HepG2 (cell line): ENCODE measurements at regions of chr2 and their contacts with region 1.

Region 1: GRCh38 chr2:74529357-74530238 is at the starts of genes AUP1 and HTRA2:
- DNase-seq: peak; percentile 98
- ATAC-seq: peak; percentile 90
- H3K4me3 ChIP-seq: peak within 1 kb of the TSS; percentile 84 to 100 (median 100)
- H3K27ac ChIP-seq: peak within 1 kb of the TSS; percentile 95
- H3K4me1 ChIP-seq: peaks cover 55% of the 10 kb centered on the region
- H3K27me3 ChIP-seq: no peaks in the 10 kb centered on the region; a peak in 1 of 5 replicates
- CTCF ChIP-seq: peak; percentile 33
- EP300 ChIP-seq: peak; percentile 58 to 73; a peak in 2 of 4 replicates
- POLR2A ChIP-seq: peak; percentile 82 to 89
- RAD21 ChIP-seq: peak; percentile 52
- total RNA-seq, gene AUP1: 67.0 and 174 TPM in 2 replicates
- total RNA-seq, gene HTRA2: 37.0 and 47.7 TPM in 2 replicates

Region 2: GRCh38 chr2:73685770-73686438 is 843.7 kb before region 1 on chr2:
- CTCF ChIA-PET with region 1: no interaction called
- POLR2A ChIA-PET with region 1: no interaction called
- in situ Hi-C with region 1: no loop called
- intact Hi-C with region 1: no loop called
- DNase-seq: peak; percentile 71
- ATAC-seq: peak; percentile 68
- H3K4me3 ChIP-seq: peak overlapping the region in 1 of 3 experiments; percentile 14; a peak in 2 of 6 replicates
- H3K27ac ChIP-seq: no peak overlapping the region
- H3K4me1 ChIP-seq: peaks cover 22% of the 10 kb centered on the region
- H3K27me3 ChIP-seq: no peaks in the 10 kb centered on the region
- CTCF ChIP-seq: no peak; the same call in 1 of the 2 replicates
- EP300 ChIP-seq: no peak
- POLR2A ChIP-seq: no peak
- RAD21 ChIP-seq: no peak

Region 3: DNA sequence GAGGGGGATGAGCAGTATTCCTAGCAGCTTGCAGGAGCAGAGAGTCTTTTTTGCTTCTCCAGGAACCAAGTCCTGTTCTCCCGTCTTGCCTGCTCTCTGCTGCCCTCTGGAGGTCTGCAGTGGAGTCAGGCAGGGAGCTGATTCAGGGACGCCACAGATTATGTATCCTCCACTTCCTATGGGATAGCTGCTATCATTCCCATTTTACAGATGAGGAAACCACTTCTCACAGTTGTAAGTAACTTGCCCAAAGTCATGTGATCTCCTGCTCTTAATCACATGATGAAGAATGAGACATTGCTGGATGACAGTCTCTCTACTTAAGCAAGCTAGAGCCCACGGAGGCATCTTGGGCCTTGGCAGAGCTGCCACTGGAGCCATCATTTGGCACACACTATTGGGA is 194.7 kb before region 1 on chr2:
- CTCF ChIA-PET with region 1: interaction called, 4 read pairs
- POLR2A ChIA-PET with region 1: no interaction called
- in situ Hi-C with region 1: no loop called
- intact Hi-C with region 1: loop called (anchors 1 kb)
- DNase-seq: peak; percentile 59
- ATAC-seq: peak; percentile 89
- H3K4me3 ChIP-seq: no peak overlapping the region
- H3K27ac ChIP-seq: no peak overlapping the region
- H3K4me1 ChIP-seq: no peaks in the 10 kb centered on the region
- H3K27me3 ChIP-seq: no peaks in the 10 kb centered on the region
- CTCF ChIP-seq: peak; percentile 92
- EP300 ChIP-seq: no peak
- POLR2A ChIP-seq: no peak
- RAD21 ChIP-seq: peak; percentile 65

Region 4: GRCh38 chr2:74472086-74472944 is 57.3 kb before region 1 on chr2 and contains the start of gene MRPL53:
- CTCF ChIA-PET with region 1: no interaction called
- POLR2A ChIA-PET with region 1: interaction called, 24 read pairs
- in situ Hi-C with region 1: no loop called
- intact Hi-C with region 1: loop called (anchors 1 kb)
- DNase-seq: peak; percentile 92
- ATAC-seq: peak; percentile 87
- H3K4me3 ChIP-seq: peak within 1 kb of the TSS; percentile 67 to 91 (median 83)
- H3K27ac ChIP-seq: peak within 1 kb of the TSS; percentile 83
- H3K4me1 ChIP-seq: peaks cover 52% of the 10 kb centered on the region
- H3K27me3 ChIP-seq: no peaks in the 10 kb centered on the region; a peak in 1 of 5 replicates
- CTCF ChIP-seq: peak; percentile 42; the same call in 1 of the 2 replicates
- EP300 ChIP-seq: peak in 1 of 2 experiments; percentile 54; a peak in 2 of 4 replicates
- POLR2A ChIP-seq: peak; percentile 94 to 97
- RAD21 ChIP-seq: peak; percentile 45; the same call in 1 of the 2 replicates
- total RNA-seq, gene MRPL53: 51.9 and 53.8 TPM in 2 replicates

Region 5: DNA sequence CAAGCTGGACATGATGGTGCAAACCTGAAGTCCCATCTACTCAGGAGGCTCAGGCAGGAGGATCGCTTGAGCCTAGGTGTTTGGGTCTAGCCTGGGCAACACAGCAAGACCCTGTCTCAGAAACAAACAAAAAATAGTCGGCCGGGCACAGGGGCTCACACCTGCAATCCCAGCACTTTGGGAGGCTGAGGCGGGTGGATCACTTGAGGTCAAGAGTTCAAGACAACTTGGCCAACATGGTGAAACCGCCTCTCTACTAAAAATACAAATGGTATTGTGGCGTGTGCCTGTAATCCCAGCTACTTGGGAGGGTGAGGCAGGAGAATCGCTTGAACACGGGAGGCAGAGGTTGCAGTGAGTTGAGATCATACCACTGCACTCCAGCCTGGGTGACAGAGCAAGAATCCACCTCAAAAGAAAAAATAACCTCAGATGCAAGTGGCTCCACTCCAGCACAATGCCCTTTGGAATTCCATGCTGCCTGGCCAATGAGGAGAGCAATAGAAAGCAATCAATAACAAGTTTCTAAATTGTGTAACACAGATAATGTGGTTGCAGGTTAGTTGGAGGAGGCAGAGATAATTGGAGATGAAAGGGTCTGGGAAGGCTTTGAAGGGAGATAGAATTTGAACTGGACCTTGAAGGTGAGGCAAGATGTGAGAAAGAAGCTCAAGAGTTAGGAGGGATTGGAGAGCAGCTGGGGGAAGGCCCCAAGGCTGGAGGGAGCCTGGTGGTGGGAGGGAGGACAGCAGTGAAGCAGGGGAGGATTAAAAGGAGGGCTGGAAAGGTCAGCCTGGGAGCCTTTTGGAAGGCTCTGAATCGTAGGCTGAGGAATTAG is 40.7 kb before region 1 on chr2:
- CTCF ChIA-PET with region 1: interaction called, 19 read pairs
- POLR2A ChIA-PET with region 1: interaction called, 93 read pairs
- in situ Hi-C with region 1: no loop called
- intact Hi-C with region 1: no loop called
- DNase-seq: peak; percentile 93
- ATAC-seq: peak; percentile 83
- H3K4me3 ChIP-seq: peak overlapping the region in 1 of 3 experiments; percentile 18; a peak in 2 of 6 replicates
- H3K27ac ChIP-seq: peak overlapping the region; percentile 84
- H3K4me1 ChIP-seq: peaks cover 77% of the 10 kb centered on the region
- H3K27me3 ChIP-seq: no peaks in the 10 kb centered on the region
- CTCF ChIP-seq: 0 out of 2 replicates have a peak, but pooled peaks have one; percentile 3
- EP300 ChIP-seq: peak; percentile 92 to 98
- POLR2A ChIP-seq: peak; percentile 28 to 65; a peak in 1 of 4 replicates
- RAD21 ChIP-seq: no peak

Region 6: DNA sequence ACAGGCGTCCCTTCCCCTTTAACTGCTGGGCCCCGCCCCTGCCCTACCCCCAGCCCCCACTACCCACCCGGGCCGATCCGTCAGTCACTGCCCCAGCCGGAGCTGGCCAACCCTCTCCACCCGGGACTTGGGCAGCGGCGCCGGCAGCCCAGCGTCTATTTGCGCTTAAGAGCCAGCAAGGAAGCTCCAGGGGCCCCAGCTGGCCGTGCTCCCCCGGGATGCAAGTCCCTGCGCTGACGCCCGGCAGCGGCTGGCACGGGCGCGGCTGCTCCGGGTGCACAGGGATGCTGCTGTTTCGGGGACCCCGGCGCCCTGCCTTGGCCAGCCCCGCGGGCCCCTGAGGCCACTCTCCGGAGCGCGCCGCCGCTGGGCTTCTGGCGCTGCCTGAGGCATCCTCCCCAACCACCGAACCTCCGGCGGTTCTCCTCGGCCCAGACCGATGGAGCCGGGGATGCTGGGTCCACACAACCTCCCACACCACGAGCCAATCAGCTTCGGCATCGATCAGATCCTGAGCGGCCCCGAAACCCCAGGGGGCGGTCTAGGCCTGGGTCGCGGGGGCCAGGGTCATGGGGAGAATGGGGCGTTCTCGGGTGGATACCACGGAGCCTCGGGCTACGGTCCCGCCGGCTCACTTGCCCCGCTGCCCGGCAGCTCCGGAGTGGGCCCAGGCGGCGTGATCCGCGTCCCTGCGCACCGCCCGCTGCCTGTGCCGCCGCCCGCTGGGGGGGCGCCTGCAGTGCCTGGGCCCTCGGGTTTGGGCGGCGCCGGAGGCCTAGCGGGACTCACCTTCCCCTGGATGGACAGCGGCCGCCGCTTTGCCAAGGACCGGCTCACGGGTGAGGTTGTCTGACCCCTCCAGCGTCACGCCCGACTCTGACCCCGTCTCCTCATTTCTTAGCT is 15.0 kb before region 1 on chr2 and contains the start of gene TLX2:
- CTCF ChIA-PET with region 1: no interaction called
- POLR2A ChIA-PET with region 1: interaction called, 135 read pairs
- in situ Hi-C with region 1: no loop called
- intact Hi-C with region 1: no loop called
- DNase-seq: no peak
- ATAC-seq: no peak
- H3K4me3 ChIP-seq: peak within 1 kb of the TSS; percentile 43 to 63 (median 62); a peak in 5 of 6 replicates
- H3K27ac ChIP-seq: peak within 1 kb of the TSS; percentile 27
- H3K4me1 ChIP-seq: peaks cover 45% of the 10 kb centered on the region
- H3K27me3 ChIP-seq: no peaks in the 10 kb centered on the region
- CTCF ChIP-seq: no peak
- EP300 ChIP-seq: no peak
- POLR2A ChIP-seq: no peak
- RAD21 ChIP-seq: no peak
- total RNA-seq, gene TLX2: 0.20 TPM in 1 of 2 replicates, not detected in the other